ENCODE measurements at regions of chr15 and their contacts with region 1.

Region 1: DNA sequence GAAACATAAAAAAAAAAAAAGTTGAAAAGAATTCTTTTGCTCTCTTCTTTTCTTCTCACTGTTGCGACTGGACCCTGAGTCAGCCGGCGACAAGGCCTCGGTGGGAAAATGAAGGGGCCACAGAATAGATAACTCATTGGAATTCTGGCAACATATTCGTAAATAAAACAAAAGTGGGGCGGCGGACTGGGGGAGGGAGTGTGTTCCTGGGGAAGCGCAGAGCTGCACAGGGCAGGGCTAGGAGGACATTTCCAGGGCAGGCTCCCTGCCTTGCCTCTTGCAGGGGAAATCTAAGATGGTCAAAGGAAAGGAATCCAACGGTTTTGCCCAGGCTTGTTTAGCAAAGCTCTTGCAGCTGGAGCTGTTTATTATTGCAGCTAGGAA is 1042.8 kb upstream of the NR2F2 start:
- DNase-seq: no peak
- ATAC-seq: no peak; the same call in 1 of the 2 replicates
- H3K4me3 Mint-ChIP-seq: peak overlapping the region; percentile 36
- H3K27ac Mint-ChIP-seq: no peak overlapping the region
- H3K4me1 Mint-ChIP-seq: peaks cover 45% of the 10 kb centered on the region
- H3K27me3 Mint-ChIP-seq: no peaks in the 10 kb centered on the region; the same call in 1 of the 2 replicates
- CTCF ChIP-seq: no peak

Region 2: GRCh38 chr15:95044745-95045417 is 242.8 kb before region 1 on chr15:
- CTCF ChIA-PET with region 1: no interaction called
- POLR2A ChIA-PET with region 1: interaction called, 11 read pairs
- DNase-seq: no peak
- ATAC-seq: peak; percentile 60
- H3K4me3 Mint-ChIP-seq: peak overlapping the region; percentile 42
- H3K27ac Mint-ChIP-seq: peak overlapping the region; percentile 83
- H3K4me1 Mint-ChIP-seq: peaks cover 50% of the 10 kb centered on the region
- H3K27me3 Mint-ChIP-seq: peaks cover 4% of the 10 kb centered on the region
- CTCF ChIP-seq: no peak